B cell (primary cell): ENCODE measurements at regions of chr6 and their contacts with region 1.

Region 1: DNA sequence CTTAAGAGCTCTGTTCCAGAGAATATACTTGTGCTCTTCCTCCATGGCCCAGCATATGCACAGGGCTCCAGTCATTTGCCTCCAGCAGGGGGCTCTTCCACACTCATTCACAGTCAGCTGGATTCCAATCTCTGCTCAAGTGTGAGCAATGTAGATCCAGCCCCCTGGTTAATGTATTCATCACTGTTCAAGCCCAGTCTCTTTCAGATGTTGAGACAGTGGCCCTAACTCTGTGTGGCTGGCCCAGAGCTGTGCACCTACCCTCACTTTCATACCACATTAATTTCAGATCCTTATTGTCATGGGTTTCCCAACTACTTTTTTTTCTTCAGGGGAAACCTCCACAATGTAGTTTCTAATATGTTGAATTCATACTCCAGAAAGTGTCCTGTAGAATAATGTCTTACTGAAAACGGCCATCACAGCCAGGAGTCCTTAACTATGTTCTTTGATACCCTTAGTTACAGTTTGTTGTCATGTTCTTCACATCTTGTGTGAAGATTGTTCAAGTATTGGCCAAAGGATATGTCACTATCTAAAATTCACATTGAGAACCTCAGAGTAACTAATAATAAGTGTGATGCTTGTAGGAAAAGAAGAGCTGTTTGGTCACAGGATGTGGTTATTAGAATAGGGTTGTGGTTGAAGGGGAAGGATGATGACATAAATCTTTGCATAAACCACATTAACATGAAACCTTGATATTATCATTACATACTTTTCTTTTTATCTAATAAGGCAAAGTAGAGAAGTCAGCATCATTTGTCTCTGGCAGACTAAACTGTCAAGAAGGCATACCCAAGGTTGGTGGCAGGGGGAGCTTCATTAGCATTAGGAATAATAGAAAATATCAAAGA is 14.4 kb upstream of the HLA-DQA1 start:
- DNase-seq: peak; percentile 94
- ATAC-seq: peak; percentile 66
- H3K4me3 ChIP-seq: peak overlapping the region in 4 of 5 experiments; percentile 18 to 41 (median 34)
- H3K4me3 Mint-ChIP-seq: peak overlapping the region; percentile 82
- H3K27ac ChIP-seq: peak overlapping the region; percentile 97 to 99
- H3K27ac Mint-ChIP-seq: peak overlapping the region; percentile 98
- H3K4me1 ChIP-seq: peaks cover 58 to 62% of the 10 kb centered on the region in 2 donors
- H3K4me1 Mint-ChIP-seq: peaks cover 65% of the 10 kb centered on the region
- H3K27me3 ChIP-seq: no peaks in the 10 kb centered on the region
- H3K27me3 Mint-ChIP-seq: no peaks in the 10 kb centered on the region
- CTCF ChIP-seq: peak; percentile 72

Region 2: GRCh38 chr6:32288426-32288825 is 334.3 kb before region 1 on chr6:
- CTCF ChIA-PET with region 1: no interaction called
- POLR2A ChIA-PET with region 1: no interaction called
- intact Hi-C with region 1: no loop called
- DNase-seq: no peak
- ATAC-seq: no peak
- H3K4me3 ChIP-seq: no peak overlapping the region
- H3K4me3 Mint-ChIP-seq: no peak overlapping the region
- H3K27ac ChIP-seq: no peak overlapping the region
- H3K27ac Mint-ChIP-seq: no peak overlapping the region
- H3K4me1 ChIP-seq: peaks cover 5 to 8% of the 10 kb centered on the region in 2 donors
- H3K4me1 Mint-ChIP-seq: peaks cover 34% of the 10 kb centered on the region
- H3K27me3 ChIP-seq: no peaks in the 10 kb centered on the region
- H3K27me3 Mint-ChIP-seq: no peaks in the 10 kb centered on the region
- CTCF ChIP-seq: no peak

Region 3: GRCh38 chr6:32439602-32440214 is 183.1 kb before region 1 on chr6 and contains the start of gene HLA-DRA:
- CTCF ChIA-PET with region 1: interaction called, 5 read pairs
- POLR2A ChIA-PET with region 1: interaction called, 9 read pairs
- intact Hi-C with region 1: loop called (anchors 1 kb)
- DNase-seq: peak; percentile 97
- ATAC-seq: peak; percentile 69
- H3K4me3 ChIP-seq: peak within 1 kb of the TSS; percentile 77 to 100 (median 99)
- H3K4me3 Mint-ChIP-seq: peak within 1 kb of the TSS; percentile 98
- H3K27ac ChIP-seq: peak within 1 kb of the TSS; percentile 99 to 100
- H3K27ac Mint-ChIP-seq: peak within 1 kb of the TSS; percentile 99
- H3K4me1 ChIP-seq: peaks cover 70 to 71% of the 10 kb centered on the region in 2 donors
- H3K4me1 Mint-ChIP-seq: peaks cover 80% of the 10 kb centered on the region
- H3K27me3 ChIP-seq: no peaks in the 10 kb centered on the region
- H3K27me3 Mint-ChIP-seq: no peaks in the 10 kb centered on the region
- CTCF ChIP-seq: no peak
- total RNA-seq, gene HLA-DRA: 2,785 and 2,881 TPM in 2 replicates

Region 4: DNA sequence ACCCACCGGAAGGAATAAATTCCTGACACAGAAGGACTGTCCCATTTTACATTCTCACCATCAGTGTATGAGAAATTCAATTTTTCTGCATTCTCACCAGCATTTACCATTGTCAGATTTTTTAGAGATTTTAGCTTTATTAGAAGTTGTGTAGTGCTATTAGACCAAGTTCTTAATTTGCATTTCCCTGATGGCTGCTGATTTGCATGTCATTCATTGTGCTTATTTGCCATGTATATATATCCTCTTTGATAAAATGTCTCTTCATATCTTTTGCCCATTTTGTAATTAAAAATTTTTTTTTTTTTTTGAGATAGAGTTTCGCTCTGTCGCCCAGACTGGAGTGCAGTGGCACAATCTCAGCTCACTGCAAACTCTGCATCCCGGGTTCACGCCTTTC is 82.9 kb before region 1 on chr6:
- CTCF ChIA-PET with region 1: no interaction called
- POLR2A ChIA-PET with region 1: no interaction called
- intact Hi-C with region 1: no loop called
- DNase-seq: no peak
- ATAC-seq: no peak
- H3K4me3 ChIP-seq: no peak overlapping the region
- H3K4me3 Mint-ChIP-seq: no peak overlapping the region
- H3K27ac ChIP-seq: no peak overlapping the region
- H3K27ac Mint-ChIP-seq: no peak overlapping the region
- H3K4me1 ChIP-seq: no peaks in the 10 kb centered on the region
- H3K4me1 Mint-ChIP-seq: peaks cover 2% of the 10 kb centered on the region
- H3K27me3 ChIP-seq: no peaks in the 10 kb centered on the region
- H3K27me3 Mint-ChIP-seq: no peaks in the 10 kb centered on the region
- CTCF ChIP-seq: no peak

Region 5: DNA sequence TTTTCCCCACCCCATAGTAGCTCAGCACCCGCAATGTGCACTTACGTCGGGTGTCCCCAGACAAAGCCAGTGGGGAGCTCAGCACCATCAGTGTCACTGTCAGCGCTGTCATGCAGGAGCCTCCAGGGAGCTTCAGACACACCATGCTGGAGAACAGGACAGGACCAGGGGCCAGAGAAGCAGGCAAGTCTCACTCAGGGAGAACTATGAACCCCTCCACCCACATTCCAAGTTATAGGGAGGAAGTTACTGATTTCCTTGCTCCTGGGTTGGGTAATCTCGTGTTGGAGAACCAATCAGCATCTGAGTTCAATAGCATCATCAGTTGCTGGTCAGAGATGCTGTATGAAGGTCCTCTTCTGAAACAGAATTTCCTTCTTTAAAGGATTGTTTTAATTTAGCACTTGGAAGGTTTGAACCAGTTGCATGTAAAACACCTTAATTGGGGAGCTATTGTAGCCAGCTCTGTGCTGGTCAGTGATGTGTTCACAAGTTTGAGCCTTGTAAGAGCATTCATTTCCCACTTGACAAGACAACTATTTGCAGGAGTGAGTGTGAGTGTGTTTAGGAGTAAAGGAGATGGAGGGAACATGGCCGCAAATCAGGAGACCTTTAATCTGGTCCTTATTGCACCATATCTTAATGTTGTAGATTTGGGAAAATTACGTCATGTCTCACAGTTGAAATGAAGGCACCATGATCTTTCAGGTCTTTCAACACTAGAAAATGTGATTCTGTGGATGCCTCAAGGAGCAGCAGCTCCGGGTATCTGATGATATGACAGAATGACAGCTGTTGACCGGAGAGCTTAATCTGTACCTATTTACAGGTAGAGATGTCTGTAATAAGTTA is 32.9 kb before region 1 on chr6 and contains the start of gene HLA-DRB1:
- CTCF ChIA-PET with region 1: interaction called, 5 read pairs
- POLR2A ChIA-PET with region 1: interaction called, 10 read pairs
- intact Hi-C with region 1: loop called (anchors 5 kb)
- DNase-seq: peak; percentile 87
- ATAC-seq: peak; percentile 94
- H3K4me3 ChIP-seq: peak within 1 kb of the TSS in 4 of 5 experiments; percentile 52 to 72 (median 62)
- H3K4me3 Mint-ChIP-seq: peak within 1 kb of the TSS; percentile 97
- H3K27ac ChIP-seq: peak within 1 kb of the TSS; percentile 74 to 86
- H3K27ac Mint-ChIP-seq: peak within 1 kb of the TSS; percentile 100
- H3K4me1 ChIP-seq: peaks cover 0 to 13% of the 10 kb centered on the region in 2 donors
- H3K4me1 Mint-ChIP-seq: peaks cover 63% of the 10 kb centered on the region
- H3K27me3 ChIP-seq: no peaks in the 10 kb centered on the region
- H3K27me3 Mint-ChIP-seq: no peaks in the 10 kb centered on the region
- CTCF ChIP-seq: no peak
- total RNA-seq, gene HLA-DRB1: 559 and 584 TPM in 2 replicates

Region 6: DNA sequence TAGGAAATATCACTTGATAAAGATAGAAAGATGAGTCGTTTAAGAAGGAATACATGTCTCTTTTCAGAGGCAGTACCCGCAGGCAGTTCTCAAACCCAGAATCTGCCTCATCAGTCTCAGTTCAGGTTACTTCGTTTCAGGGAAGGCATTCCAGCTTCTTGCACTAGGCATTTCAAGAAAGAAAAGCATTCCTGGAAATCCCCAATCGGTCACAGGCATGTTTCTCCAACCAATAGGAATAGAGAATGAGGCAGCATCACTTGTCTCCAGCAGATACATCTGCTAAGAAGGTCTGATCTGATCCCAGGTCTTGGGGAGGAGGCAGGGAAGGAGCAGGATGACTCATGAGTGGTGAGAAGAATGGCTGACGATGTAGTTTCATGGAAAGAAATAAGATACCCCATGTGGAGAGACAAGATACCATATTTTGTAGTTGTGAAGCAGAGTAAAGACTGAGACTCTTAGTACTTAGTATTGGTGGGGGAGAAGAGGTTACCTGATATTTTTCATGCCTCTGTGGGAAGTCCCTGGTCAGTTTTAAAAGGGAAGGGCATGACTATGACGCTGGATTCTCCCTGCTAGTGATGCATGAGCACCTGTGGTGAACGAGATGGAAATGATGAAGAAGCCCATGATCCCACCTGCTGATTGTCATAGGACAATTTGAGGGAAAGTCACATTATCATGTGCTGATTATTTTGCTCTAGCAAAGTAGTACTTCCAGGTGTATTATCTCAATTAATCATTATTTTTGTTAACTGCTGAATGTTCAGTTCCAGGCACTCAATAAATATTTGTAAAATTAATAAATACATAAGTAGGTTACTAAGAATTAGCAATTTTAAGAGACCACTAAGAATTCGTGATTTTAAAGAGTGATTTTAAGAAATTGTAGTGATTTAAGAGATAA is 12.8 kb before region 1 on chr6:
- CTCF ChIA-PET with region 1: interaction called, 20 read pairs
- POLR2A ChIA-PET with region 1: interaction called, 34 read pairs
- intact Hi-C with region 1: loop called (anchors 1 kb)
- DNase-seq: peak; percentile 99
- ATAC-seq: peak; percentile 88
- H3K4me3 ChIP-seq: peak overlapping the region in 4 of 5 experiments; percentile 25 to 41 (median 30)
- H3K4me3 Mint-ChIP-seq: no peak overlapping the region
- H3K27ac ChIP-seq: peak overlapping the region; percentile 99 to 100
- H3K27ac Mint-ChIP-seq: no peak overlapping the region
- H3K4me1 ChIP-seq: peaks cover 47 to 53% of the 10 kb centered on the region in 2 donors
- H3K4me1 Mint-ChIP-seq: peaks cover 59% of the 10 kb centered on the region
- H3K27me3 ChIP-seq: no peaks in the 10 kb centered on the region
- H3K27me3 Mint-ChIP-seq: no peaks in the 10 kb centered on the region
- CTCF ChIP-seq: no peak

Region 7: DNA sequence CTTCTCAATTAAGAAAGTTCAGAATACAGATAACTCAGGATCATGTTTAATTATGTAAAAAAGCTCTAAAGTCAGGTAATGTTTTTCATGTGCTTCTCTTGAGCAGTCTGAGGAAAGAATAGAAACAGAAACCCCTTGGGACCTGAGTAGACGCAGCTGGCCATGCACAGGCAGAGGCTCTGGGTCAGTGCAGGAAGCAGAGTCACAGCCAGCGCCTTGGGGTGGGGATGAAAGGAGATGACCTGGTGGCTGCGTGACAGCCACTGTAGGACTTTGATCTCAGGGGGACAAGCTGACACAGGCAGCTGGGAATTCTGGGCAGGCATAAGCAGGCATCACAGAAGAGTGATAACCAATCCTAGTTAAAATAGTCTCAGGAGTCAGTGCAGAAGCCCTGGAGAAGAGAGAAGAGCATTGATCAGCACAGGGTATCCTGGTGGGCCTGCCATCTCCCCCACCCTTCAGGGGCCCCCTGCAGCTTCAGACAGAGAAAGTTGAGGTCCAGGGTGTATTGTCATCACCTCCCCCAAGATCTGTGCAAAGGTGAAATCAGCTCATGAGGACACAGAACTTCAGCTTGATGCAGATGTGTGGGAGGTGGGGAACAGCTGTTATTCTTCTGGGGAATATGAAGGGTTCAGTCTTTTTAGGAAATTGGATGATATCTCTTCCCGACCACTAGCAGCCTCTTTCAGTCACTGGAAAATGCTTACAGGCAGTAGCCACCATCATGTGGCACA is 37.3 kb after region 1 on chr6:
- CTCF ChIA-PET with region 1: interaction called, 9 read pairs
- POLR2A ChIA-PET with region 1: interaction called, 6 read pairs
- intact Hi-C with region 1: loop called (anchors 1 kb)
- DNase-seq: peak; percentile 54
- ATAC-seq: peak; percentile 78
- H3K4me3 ChIP-seq: peak overlapping the region in 2 of 5 experiments; percentile 2 to 20
- H3K4me3 Mint-ChIP-seq: peak overlapping the region; percentile 89
- H3K27ac ChIP-seq: peak overlapping the region in 1 of 2 donors; percentile 57
- H3K27ac Mint-ChIP-seq: peak overlapping the region; percentile 100
- H3K4me1 ChIP-seq: peaks cover 34 to 49% of the 10 kb centered on the region in 2 donors
- H3K4me1 Mint-ChIP-seq: peaks cover 66% of the 10 kb centered on the region
- H3K27me3 ChIP-seq: no peaks in the 10 kb centered on the region
- H3K27me3 Mint-ChIP-seq: no peaks in the 10 kb centered on the region
- CTCF ChIP-seq: no peak

Region 8: DNA sequence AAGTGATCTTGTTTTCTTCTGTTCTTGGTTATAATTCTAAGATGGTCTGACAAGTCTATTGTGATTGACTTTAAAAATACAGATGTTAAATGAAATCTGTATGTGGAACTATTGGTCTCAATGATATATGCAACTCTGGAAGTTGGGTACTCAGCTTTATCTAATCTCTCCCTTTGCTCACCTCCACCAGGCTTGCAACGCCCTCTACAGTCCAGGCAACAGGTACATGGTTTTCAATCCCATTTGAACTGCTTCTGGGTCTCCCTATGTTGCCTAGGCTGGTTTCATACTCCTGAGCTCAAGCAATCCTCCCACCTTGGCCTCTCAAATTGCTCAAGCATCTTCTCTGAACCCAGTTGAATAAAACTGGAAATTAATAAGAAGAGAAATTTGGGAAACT is 69.2 kb after region 1 on chr6:
- CTCF ChIA-PET with region 1: interaction called, 9 read pairs
- POLR2A ChIA-PET with region 1: interaction called, 3 read pairs
- intact Hi-C with region 1: loop called (anchors 1 kb)
- DNase-seq: peak; percentile 85
- ATAC-seq: peak; percentile 60
- H3K4me3 ChIP-seq: no peak overlapping the region
- H3K4me3 Mint-ChIP-seq: peak overlapping the region; percentile 53
- H3K27ac ChIP-seq: peak overlapping the region; percentile 68 to 95
- H3K27ac Mint-ChIP-seq: peak overlapping the region; percentile 85
- H3K4me1 ChIP-seq: peaks cover 27 to 28% of the 10 kb centered on the region in 2 donors
- H3K4me1 Mint-ChIP-seq: peaks cover 33% of the 10 kb centered on the region
- H3K27me3 ChIP-seq: no peaks in the 10 kb centered on the region
- H3K27me3 Mint-ChIP-seq: no peaks in the 10 kb centered on the region
- CTCF ChIP-seq: peak; percentile 42